WTC11 (cell line): ENCODE measurements at regions of chr15 and their contacts with region 1.

Region 1: GRCh38 chr15:85742186-85742821 is 52.4 kb downstream of the KLHL25 start:
- DNase-seq: no peak
- ATAC-seq: peak; percentile 38
- H3K4me3 Mint-ChIP-seq: no peak overlapping the region
- H3K27ac Mint-ChIP-seq: no peak overlapping the region; the same call in 1 of the 2 replicates
- H3K4me1 Mint-ChIP-seq: peaks cover 19% of the 10 kb centered on the region
- H3K27me3 Mint-ChIP-seq: no peaks in the 10 kb centered on the region
- CTCF ChIP-seq: no peak

Region 2: GRCh38 chr15:85730001-85730820 is 12.1 kb before region 1 on chr15:
- CTCF ChIA-PET with region 1: interaction called, 21 read pairs
- POLR2A ChIA-PET with region 1: no interaction called
- DNase-seq: no peak
- ATAC-seq: peak; percentile 87
- H3K4me3 Mint-ChIP-seq: no peak overlapping the region
- H3K27ac Mint-ChIP-seq: peak overlapping the region; percentile 5; the same call in 1 of the 2 replicates
- H3K4me1 Mint-ChIP-seq: no peaks in the 10 kb centered on the region
- H3K27me3 Mint-ChIP-seq: peaks cover 2% of the 10 kb centered on the region
- CTCF ChIP-seq: no peak